ENCODE measurements at regions of chr11 and their contacts with region 1.

Region 1: GRCh38 chr11:72722050-72722748 is 30.0 kb downstream of the ARAP1 start:
- DNase-seq: peak; percentile 78
- ATAC-seq: peak; percentile 88
- H3K4me3 Mint-ChIP-seq: peak overlapping the region; percentile 97
- H3K27ac Mint-ChIP-seq: peak overlapping the region; percentile 94
- H3K4me1 Mint-ChIP-seq: peaks cover 85% of the 10 kb centered on the region
- H3K27me3 Mint-ChIP-seq: no peaks in the 10 kb centered on the region
- CTCF ChIP-seq: no peak

Region 2: DNA sequence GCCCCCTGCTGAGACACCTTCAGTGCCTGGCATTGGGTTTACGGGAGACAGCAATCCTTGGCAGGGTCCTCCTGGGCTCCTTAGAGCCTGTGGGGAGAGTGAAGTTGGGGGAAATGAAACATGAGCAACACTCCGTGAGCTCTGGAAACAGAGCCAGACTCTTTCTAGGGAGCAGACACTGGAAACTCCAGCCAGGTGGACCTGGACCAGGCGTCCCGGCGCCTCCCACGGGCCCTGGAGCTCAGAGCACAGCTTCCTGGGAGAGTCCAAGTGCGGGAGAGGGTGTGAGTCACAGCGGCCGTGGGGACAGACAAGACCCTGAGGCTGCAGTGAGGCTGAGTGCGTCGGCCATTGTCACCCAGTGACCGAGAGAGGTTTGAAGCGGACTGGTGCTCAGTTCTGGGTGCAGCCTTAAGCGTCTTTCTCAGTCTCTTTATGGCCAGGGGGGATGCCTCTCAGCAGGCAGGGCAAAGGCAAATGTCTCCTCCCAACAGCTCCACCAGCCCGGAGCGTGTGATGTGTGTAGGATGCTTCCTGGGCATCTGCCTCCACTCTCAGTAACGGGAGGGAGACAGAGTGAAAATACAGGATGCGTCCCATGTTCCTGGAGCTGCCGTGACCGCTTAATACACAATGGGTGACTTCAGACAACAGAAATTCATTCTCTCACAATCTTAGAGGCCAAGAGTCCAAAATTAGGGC is 1869.0 kb before region 1 on chr11:
- CTCF ChIA-PET with region 1: no interaction called
- POLR2A ChIA-PET with region 1: no interaction called
- intact Hi-C with region 1: no loop called
- DNase-seq: no peak
- ATAC-seq: no peak
- H3K4me3 Mint-ChIP-seq: no peak overlapping the region
- H3K27ac Mint-ChIP-seq: no peak overlapping the region
- H3K4me1 Mint-ChIP-seq: no peaks in the 10 kb centered on the region
- H3K27me3 Mint-ChIP-seq: peaks cover 3% of the 10 kb centered on the region
- CTCF ChIP-seq: no peak

Region 3: DNA sequence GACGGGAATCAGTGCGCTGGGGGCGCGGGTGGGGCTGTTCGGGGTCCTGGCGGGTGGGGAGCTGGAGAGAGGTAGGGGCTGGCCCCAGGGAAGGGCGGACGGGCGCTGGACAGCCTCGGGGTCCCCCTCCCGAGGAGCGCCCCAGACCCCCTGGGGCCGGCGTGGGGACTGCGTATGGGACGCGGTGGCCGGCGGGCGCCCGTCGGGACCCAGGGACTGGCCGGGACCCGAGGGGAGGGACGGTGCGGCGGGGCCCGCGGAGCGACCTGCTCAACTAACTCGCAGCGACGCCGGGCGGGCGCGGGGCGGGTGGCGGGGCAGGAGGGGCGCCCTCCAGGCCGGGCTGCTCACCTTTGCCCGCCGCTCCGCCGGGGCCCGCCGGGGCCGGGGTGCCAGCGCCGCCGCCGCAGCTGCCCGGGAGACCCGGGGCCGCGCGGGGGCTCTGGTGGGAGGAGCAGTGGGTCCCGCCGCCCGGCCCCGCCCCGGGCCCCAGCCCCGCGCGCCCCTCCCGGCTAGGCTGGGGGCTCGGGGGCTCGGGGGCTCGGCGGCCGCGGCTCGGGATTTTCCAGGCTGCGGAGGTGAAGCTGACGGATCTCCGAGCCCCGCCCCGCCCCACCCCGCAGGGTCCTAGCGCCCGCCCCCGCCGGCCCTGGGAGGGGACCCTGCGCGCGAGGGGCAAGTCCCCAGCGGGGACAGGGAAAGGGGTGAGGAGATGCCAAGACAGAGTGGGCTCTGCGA is 59.3 kb after region 1 on chr11:
- CTCF ChIA-PET with region 1: interaction called, 21 read pairs
- POLR2A ChIA-PET with region 1: interaction called, 6 read pairs
- intact Hi-C with region 1: no loop called
- DNase-seq: peak; percentile 59
- ATAC-seq: peak; percentile 82
- H3K4me3 Mint-ChIP-seq: peak overlapping the region; percentile 83
- H3K27ac Mint-ChIP-seq: no peak overlapping the region
- H3K4me1 Mint-ChIP-seq: peaks cover 35% of the 10 kb centered on the region
- H3K27me3 Mint-ChIP-seq: no peaks in the 10 kb centered on the region
- CTCF ChIP-seq: no peak

Region 4: DNA sequence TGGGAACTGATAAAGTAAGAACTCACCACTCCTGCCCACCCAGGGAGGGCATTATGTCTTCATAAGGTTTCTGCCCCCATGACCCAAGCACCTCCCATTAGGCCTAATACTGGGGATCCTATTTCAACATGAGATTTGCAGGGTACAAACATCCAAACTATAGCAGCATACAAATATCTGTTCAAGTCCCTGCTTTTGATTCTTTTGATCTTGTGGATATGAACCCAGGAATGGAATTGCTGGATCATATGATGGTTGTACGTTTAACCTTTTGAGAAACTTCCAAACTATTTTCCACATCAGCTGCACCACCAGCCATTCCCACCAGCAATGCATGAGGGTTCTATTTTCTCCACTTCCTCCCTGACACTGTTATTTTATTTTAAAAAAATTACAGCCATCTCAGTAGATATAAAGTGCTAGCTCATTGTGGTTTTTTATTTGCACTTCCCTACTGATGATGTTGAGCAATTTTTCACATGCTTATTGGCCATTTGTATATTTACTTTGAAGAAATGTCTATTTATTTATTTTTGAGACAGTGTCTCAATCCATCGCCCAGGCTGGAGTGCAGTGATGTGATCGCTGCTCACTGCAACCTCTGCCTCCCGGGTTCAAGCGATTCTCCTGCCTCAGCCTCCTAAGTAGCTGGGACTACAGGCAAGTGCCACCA is 85.0 kb after region 1 on chr11:
- CTCF ChIA-PET with region 1: interaction called, 27 read pairs
- POLR2A ChIA-PET with region 1: interaction called, 26 read pairs
- intact Hi-C with region 1: no loop called
- DNase-seq: no peak
- ATAC-seq: peak; percentile 36
- H3K4me3 Mint-ChIP-seq: no peak overlapping the region
- H3K27ac Mint-ChIP-seq: no peak overlapping the region
- H3K4me1 Mint-ChIP-seq: peaks cover 26% of the 10 kb centered on the region
- H3K27me3 Mint-ChIP-seq: no peaks in the 10 kb centered on the region
- CTCF ChIP-seq: no peak

Region 5: DNA sequence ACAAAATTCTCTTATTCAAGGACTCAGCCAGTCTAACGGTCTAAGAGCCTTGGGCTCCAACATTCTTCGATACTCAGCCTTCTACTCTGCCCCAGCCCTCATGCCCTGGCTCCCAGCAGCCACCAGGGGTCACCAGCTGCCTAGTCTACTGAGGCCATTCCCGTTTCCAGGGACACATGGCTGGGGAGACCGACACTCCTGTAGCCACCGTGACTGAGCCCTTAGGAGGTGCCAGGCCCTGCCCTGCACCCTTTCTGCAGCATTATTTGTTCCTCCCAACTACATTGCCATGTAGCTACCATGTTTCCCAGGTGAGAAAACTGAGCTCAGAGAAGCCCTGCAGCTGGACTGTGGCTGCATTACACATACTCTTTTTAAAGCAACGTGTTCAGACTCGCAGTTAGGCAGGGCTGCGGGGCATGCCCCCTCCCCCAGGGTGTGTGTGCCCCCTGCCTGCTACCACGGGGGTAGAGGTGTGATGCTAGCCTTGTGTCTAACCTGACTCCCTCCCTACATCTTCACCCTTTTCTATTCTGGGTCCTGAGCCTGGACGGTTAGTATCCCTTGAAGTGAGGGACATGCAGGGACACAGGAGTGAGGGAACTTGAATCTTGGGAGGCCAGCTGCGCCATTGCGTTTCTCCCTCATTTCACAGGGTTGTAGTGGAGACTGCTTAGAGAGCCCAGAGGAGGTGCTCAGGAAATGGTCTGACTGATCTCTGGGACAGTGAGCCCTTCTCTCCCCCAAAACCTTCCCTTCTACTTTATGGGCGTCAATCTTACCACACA is 109.5 kb after region 1 on chr11:
- CTCF ChIA-PET with region 1: interaction called, 18 read pairs
- POLR2A ChIA-PET with region 1: interaction called, 5 read pairs
- intact Hi-C with region 1: no loop called
- DNase-seq: no peak
- ATAC-seq: peak; percentile 65
- H3K4me3 Mint-ChIP-seq: no peak overlapping the region
- H3K27ac Mint-ChIP-seq: peak overlapping the region; percentile 80
- H3K4me1 Mint-ChIP-seq: peaks cover 24% of the 10 kb centered on the region
- H3K27me3 Mint-ChIP-seq: no peaks in the 10 kb centered on the region
- CTCF ChIP-seq: peak; percentile 30

Region 6: DNA sequence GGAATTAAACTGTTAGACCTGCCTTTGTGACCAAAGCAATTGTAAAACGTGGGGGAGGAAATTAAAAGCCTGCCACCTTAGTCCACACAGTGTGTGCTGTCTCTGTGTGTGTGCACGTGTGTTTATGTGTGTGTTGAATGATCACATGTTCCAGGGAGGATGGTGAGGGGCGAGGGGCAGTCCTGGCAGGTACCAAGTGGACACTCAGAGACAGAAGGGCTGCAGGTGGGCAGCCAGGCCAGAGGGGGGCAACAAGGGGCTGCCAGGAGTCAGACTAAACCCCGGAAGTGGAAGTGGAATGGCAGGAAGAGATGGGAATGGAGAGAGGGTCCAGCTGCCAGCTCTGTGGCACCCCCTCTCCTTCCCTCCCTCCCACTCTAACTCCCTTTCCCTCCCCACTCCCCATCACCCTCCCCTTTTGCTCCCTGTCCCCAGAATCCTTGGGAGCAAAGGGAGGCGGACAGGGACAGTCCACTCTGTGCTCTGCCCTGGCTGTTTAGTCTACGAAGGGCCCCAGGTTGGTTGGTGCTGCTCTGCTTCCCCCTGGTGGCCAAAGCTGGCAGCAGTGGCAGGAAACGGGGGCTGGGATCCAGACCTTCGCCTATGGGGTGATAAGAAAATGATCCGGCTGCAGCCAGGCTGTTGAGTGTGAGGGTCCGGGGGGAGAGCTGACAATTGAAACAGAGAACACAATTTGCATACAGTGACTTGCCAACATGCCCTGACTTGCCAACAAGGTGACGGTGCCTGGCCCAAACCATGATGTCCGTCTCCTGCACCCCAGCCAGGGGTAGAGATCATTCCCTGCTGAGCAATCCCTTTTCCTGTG is 520.3 kb after region 1 on chr11:
- CTCF ChIA-PET with region 1: interaction called, 3 read pairs
- POLR2A ChIA-PET with region 1: no interaction called
- intact Hi-C with region 1: loop called (anchors 5 kb)
- DNase-seq: peak; percentile 65
- ATAC-seq: peak; percentile 95
- H3K4me3 Mint-ChIP-seq: no peak overlapping the region
- H3K27ac Mint-ChIP-seq: no peak overlapping the region
- H3K4me1 Mint-ChIP-seq: peaks cover 4% of the 10 kb centered on the region
- H3K27me3 Mint-ChIP-seq: peaks cover 5% of the 10 kb centered on the region
- CTCF ChIP-seq: peak; percentile 47